Right ventricle myocardium inferior (tissue), 1 donor: ENCODE measurements at regions of chr9 and their contacts with region 1.

Region 1: GRCh38 chr9:14314929-14315645 is 1.1 kb upstream of the NFIB start:
- DNase-seq: peak; percentile 95
- ATAC-seq: peak; percentile 84

Region 2: GRCh38 chr9:13427587-13427986 is 887.5 kb before region 1 on chr9:
- intact Hi-C with region 1: loop called (anchors 5 kb)
- DNase-seq: no peak
- ATAC-seq: no peak

Region 3: DNA sequence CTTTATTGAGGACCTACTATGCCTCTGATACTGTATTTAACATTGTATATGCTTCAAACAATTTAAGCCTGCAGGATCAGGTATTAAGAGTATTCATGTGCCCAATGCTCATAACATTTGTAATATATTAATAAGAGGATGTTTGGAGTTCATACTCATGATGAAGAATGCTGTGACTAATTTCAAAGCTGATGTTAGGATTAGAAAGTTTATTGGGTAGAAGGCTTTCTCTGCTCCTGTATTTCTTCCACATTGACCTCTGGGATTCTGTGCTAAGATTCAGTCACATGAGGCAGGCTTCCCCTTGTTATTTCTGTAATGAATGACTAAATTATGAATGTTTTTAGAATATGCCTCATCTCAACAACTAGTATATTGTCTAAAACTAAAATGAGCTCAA is 457.6 kb before region 1 on chr9:
- intact Hi-C with region 1: loop called (anchors 10 kb)
- DNase-seq: no peak
- ATAC-seq: no peak

Region 4: DNA sequence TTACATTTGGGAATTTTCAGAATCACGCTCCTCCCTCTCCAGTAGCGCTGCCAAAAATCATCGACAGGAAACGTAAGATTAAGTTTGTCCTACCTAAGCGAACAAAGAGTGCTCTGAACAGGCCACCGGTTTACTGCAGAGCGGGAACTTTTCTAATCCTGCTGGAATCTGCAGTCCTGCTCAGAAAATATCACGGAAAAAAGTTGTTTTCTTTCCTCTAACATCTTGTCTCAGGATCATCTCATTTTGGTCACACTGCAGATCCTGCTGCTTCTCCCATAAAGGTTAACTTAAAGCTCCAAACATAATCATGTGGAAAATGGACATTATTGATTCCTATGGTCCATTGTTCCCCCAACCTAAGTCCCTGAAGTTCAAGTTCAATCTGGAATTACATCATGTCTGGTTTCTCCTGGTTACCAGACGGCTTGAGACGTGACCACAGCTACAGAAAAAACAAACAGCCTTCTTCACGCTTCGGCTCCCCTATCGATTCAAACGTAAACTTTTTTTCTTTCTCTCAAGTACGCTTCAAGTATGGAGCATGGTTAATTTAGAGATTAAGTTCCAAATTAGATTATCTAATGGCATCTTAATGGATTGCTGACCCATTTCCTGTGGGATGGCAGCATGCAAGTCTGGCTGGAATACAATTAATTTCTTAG is 218.7 kb before region 1 on chr9:
- intact Hi-C with region 1: loop called (anchors 2 kb)
- DNase-seq: no peak
- ATAC-seq: peak; percentile 75

Region 5: DNA sequence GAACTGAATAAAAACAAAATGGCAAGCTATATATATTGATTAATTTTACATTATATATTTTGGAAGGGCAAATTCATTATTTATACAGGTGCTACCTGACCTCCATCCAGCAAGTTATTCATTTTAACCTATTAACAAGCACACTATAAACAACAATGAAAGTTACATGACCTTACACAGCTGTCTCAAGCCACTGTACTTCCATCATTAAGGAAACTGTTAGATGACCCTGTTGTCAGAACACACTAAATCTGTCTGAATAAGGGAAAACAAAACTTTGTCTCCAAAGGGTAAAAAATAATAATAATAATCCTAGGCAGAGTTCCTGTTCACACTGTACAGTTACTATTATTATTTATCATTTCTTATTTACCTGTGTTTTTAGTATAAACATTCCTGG is 45.2 kb before region 1 on chr9:
- intact Hi-C with region 1: loop called (anchors 5 kb)
- DNase-seq: no peak
- ATAC-seq: no peak